ENCODE measurements at regions of chr2 and their contacts with region 1.

Region 1: GRCh38 chr2:43024515-43025011 is 201.8 kb downstream of the ZFP36L2 start:
- DNase-seq: peak; percentile 79 to 87 (median 84)
- ATAC-seq: peak; percentile 96
- H3K4me3 ChIP-seq: no peak overlapping the region
- H3K27ac ChIP-seq: no peak overlapping the region
- H3K4me1 ChIP-seq: peaks cover 0 to 13% of the 10 kb centered on the region in 2 experiments; a peak in 3 of 5 replicates
- H3K27me3 ChIP-seq: no peaks in the 10 kb centered on the region
- CTCF ChIP-seq: peak; percentile 90 to 92 (median 90)
- EP300 ChIP-seq: no peak
- POLR2A ChIP-seq: no peak
- RAD21 ChIP-seq: peak; percentile 92 to 98

Region 2: DNA sequence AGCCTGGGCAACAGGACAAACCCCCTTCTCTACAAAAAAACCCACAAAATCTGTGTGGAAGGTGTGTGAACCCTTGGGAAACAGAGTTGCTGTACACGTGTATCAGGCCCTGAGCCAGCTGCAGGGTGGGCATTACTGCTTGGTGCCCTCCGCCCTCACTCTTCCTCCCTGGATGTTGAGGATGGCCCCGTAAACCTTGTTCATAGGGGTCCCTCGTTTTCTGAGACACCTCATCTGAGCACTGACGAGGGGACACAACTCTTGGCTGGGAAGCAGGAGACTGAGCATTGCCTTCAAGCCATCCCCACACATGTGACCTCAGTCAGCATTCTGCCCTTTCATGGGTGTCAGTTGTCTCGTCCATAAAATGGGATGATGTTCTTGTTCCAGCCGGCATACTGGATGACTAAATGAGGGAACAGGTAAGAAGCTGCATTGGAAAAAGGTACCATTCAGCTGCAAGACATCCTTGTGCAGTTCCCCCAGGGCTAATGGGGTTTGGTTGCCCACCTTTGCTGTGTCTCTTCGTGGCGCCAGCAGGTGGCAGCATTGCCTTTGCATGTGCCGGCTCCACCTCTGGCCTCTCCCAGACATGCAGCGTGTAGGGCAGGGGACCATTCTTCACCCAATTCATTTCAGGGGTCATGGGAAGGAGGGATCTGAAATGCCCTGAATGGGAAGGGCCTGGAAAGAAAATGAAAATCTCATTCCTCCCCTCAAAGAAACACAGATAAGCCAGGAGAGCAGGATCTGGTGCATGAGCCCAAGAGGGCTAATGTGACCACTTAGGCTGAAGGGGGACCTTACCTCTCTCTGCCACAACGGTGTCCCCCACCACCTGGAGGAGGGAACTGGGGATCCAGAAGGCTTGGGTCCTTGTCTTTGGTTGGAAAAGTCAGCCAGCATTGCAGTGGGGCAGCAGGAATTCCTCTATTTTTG is 195.8 kb before region 1 on chr2:
- CTCF ChIA-PET with region 1: interaction called, 4 read pairs
- POLR2A ChIA-PET with region 1: no interaction called
- in situ Hi-C with region 1: no loop called
- intact Hi-C with region 1: loop called (anchors 1 kb)
- DNase-seq: peak; percentile 78 to 88 (median 82)
- ATAC-seq: peak; percentile 96
- H3K4me3 ChIP-seq: no peak overlapping the region
- H3K27ac ChIP-seq: no peak overlapping the region
- H3K4me1 ChIP-seq: peaks cover 3 to 9% of the 10 kb centered on the region in 2 experiments; a peak in 2 of 5 replicates
- H3K27me3 ChIP-seq: no peaks in the 10 kb centered on the region; a peak in 1 of 5 replicates
- CTCF ChIP-seq: peak; percentile 89 to 97 (median 95)
- EP300 ChIP-seq: no peak
- POLR2A ChIP-seq: no peak
- RAD21 ChIP-seq: peak; percentile 81 to 94

Region 3: GRCh38 chr2:42944779-42945415 is 79.7 kb before region 1 on chr2:
- CTCF ChIA-PET with region 1: interaction called, 7 read pairs
- POLR2A ChIA-PET with region 1: no interaction called
- in situ Hi-C with region 1: no loop called
- intact Hi-C with region 1: loop called (anchors 1 kb)
- DNase-seq: peak in 2 of 4 experiments; percentile 44 to 47
- ATAC-seq: peak; percentile 76
- H3K4me3 ChIP-seq: no peak overlapping the region
- H3K27ac ChIP-seq: no peak overlapping the region
- H3K4me1 ChIP-seq: peaks cover 2 to 18% of the 10 kb centered on the region in 2 experiments; a peak in 4 of 5 replicates
- H3K27me3 ChIP-seq: no peaks in the 10 kb centered on the region
- CTCF ChIP-seq: no peak
- EP300 ChIP-seq: no peak
- POLR2A ChIP-seq: no peak
- RAD21 ChIP-seq: no peak

Region 4: GRCh38 chr2:42974721-42975717 is 49.5 kb before region 1 on chr2:
- CTCF ChIA-PET with region 1: no interaction called
- POLR2A ChIA-PET with region 1: no interaction called
- in situ Hi-C with region 1: loop called (anchors 5 kb)
- intact Hi-C with region 1: no loop called
- DNase-seq: peak; percentile 66 to 76 (median 75)
- ATAC-seq: peak; percentile 89
- H3K4me3 ChIP-seq: no peak overlapping the region
- H3K27ac ChIP-seq: no peak overlapping the region
- H3K4me1 ChIP-seq: peaks cover 0 to 30% of the 10 kb centered on the region in 2 experiments; a peak in 3 of 5 replicates
- H3K27me3 ChIP-seq: no peaks in the 10 kb centered on the region
- CTCF ChIP-seq: peak; percentile 79 to 88 (median 87)
- EP300 ChIP-seq: no peak
- POLR2A ChIP-seq: no peak
- RAD21 ChIP-seq: peak; percentile 85 to 92

Region 5: DNA sequence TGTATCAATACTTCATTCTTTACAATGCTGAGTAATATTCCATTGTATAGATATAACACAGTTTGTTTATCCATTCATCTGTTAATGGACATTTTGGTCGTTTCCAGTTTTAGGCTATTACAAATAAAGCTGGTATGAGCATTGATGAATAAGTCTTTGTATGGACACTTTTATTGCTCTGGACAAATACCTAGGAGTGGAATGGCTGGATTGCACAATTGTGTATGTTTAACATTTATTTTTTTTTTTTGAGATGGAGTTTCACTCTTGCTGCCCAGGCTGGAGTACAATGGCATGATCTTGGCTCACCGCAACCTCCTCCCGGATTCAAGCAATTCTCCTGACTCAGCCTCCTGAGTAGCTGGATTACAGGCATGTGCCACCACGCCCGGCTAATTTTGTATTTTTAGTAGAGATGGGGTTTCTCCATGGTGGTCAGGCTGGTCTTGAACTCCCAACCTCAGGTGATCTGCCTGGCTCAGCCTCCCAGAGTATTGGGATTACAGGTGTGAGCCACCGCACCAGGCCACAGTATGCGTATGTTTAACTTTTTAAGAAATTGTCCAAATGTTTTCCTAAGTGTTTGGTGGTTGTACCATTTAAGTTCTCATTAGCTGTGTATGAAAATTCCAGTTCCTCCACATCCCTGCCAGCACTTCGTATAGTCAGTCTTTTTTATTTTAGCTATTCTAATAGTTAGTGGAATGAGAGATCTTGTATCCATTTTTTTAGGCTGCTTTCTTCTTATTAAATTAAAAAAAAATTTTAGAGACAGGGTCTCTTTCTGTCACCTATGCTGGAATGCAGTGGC is 37.2 kb before region 1 on chr2:
- CTCF ChIA-PET with region 1: no interaction called
- POLR2A ChIA-PET with region 1: no interaction called
- in situ Hi-C with region 1: no loop called
- intact Hi-C with region 1: no loop called
- DNase-seq: no peak
- ATAC-seq: no peak
- H3K4me3 ChIP-seq: no peak overlapping the region
- H3K27ac ChIP-seq: no peak overlapping the region
- H3K4me1 ChIP-seq: peaks cover 2 to 7% of the 10 kb centered on the region in 2 experiments; a peak in 3 of 5 replicates
- H3K27me3 ChIP-seq: no peaks in the 10 kb centered on the region
- CTCF ChIP-seq: no peak
- EP300 ChIP-seq: no peak
- POLR2A ChIP-seq: no peak
- RAD21 ChIP-seq: no peak

Region 6: DNA sequence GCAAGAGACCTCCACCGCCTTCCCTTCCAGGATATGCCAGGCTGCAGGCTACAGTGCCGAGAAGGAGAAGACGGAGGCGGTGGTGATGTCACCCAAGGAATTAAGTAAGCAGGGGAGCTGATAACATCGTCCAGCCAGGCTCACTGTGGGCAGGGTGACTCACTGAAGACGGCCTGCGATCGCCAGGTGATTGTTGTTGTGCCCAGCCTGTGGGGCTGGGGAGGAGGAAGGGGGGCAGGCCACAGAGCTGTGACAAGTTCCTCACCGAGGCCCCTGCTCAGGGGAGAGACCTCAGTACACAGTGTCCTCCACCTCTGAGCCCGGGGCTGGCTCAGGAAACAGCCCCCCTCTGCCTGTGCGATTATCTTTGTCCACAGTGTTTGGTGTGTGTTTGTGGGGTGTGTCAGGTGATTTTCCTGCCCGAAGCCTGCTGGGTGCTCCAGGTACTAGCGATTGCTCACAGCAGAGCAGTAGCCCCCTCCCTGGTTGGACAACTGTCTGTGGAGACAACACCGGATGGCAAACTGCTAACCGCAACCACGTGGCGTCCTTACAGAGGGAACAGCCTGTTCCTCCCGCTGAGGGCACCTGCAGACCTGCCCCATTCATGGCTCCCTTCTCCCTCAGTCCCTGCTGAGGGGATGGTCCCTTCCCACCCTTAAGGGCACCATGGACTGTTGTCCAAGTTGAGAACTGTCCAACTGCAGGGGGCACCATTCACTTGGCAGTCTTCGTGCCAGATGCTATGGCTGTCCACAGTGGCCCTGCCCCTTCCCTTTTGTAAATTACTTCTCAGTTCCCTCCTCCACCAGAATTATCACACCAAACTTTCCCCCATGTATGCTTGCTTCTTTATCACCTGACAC is 106.7 kb after region 1 on chr2:
- CTCF ChIA-PET with region 1: no interaction called
- POLR2A ChIA-PET with region 1: no interaction called
- in situ Hi-C with region 1: no loop called
- intact Hi-C with region 1: loop called (anchors 5 kb)
- DNase-seq: peak; percentile 76 to 79 (median 77)
- ATAC-seq: peak; percentile 83
- H3K4me3 ChIP-seq: no peak overlapping the region
- H3K27ac ChIP-seq: peak overlapping the region; percentile 45; the same call in 2 of the 3 replicates
- H3K4me1 ChIP-seq: peaks cover 23 to 47% of the 10 kb centered on the region in 2 experiments; a peak in 4 of 5 replicates
- H3K27me3 ChIP-seq: no peaks in the 10 kb centered on the region
- CTCF ChIP-seq: peak; percentile 64 to 71 (median 66)
- EP300 ChIP-seq: peak; percentile 5; the same call in 1 of the 2 replicates
- POLR2A ChIP-seq: no peak
- RAD21 ChIP-seq: peak; percentile 54 to 83